ENCODE measurements at regions of chr3 and their contacts with region 1.

Region 1: DNA sequence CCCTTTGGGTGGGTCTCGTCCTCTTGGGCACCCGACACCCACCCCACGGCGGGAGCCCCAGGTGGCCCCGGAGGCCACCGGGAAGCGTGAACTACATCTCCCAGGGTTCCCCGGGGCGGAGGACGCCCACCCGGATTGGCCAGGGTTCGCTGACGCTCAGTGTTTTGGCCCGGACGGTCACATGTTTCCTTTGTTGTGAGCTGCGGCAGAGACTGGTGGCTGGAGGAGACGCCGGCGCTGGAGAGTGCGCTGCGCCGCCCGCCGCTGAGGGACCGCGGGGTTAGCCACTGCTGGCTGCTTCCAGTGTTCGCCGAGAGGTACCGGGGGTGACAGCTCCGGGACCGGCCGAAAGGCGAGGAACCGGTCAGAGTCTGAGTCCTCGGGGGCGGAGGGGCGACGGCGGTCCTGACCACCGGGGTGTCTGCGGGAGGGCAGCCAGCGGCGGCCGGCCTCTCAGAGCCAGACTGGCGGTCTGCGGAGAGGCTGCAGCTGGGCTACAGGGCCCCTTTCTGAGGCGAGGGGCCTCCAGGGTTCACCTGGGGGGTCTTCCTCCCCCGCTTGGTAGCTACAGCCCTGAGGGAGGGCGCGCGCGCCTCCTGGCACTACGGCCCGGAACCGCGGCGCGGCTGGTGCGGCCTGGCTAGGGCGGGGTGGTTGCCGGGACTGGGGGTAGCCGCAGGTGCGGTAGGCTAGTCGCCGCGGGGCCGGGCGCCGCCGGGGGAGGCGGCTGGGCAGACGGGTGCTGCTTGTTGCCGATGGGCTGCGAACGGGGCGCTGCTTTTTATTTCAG is at the start of gene KLHL24:
- DNase-seq: peak; percentile 96 to 97
- ATAC-seq: peak; percentile 97
- H3K4me3 ChIP-seq: peak within 1 kb of the TSS; percentile 68 to 94
- H3K27ac ChIP-seq: peak within 1 kb of the TSS; percentile 66 to 70
- H3K4me1 ChIP-seq: no peaks in the 10 kb centered on the region
- H3K27me3 ChIP-seq: no peaks in the 10 kb centered on the region
- total RNA-seq, gene KLHL24: 33.7 to 62.6 TPM

Region 2: DNA sequence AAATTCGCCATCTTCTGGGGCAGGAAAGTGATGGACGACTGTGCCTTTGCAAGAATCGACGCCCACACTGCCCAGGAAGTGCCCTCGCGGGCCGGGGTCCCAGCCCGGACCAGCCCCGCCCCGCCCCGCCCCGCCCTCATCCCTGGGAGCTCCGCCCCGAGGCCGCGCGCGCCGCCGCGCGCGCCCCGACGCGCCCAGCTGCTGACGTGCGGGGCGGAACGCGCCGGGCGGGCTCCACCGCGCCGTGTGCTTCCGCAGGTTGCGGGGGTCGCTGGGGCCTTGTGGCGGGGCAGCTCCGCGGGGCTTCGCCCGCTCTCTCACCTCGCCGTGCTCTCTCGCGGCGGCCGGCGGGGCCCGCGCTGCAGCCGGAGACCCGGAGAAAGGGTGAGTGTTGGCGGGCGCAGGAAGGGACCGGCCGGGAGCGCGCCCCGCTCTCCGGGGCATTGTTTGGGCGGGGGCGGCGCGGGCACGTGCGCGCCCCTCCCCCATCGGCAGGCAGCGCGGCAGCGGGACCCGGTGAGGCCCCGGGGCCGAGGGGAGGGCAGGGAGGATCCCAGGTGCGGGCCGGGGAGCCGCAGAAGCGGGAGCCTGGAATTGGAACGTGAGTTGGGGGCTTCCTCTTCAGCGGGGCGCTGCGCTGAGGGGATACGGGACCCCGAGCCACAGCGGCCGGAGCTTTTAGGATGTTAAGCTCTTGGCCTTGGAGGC is 62.1 kb after region 1 on chr3 and contains the start of gene YEATS2:
- intact Hi-C with region 1: loop called (anchors 2 to 5 kb)
- DNase-seq: peak; percentile 82 to 88
- ATAC-seq: peak; percentile 89
- H3K4me3 ChIP-seq: peak within 1 kb of the TSS; percentile 68 to 93
- H3K27ac ChIP-seq: peak within 1 kb of the TSS; percentile 10 to 88
- H3K4me1 ChIP-seq: peaks cover 3 to 5% of the 10 kb centered on the region in 2 donors
- H3K27me3 ChIP-seq: no peaks in the 10 kb centered on the region
- total RNA-seq, gene YEATS2: 25.8 to 48.1 TPM

Region 3: DNA sequence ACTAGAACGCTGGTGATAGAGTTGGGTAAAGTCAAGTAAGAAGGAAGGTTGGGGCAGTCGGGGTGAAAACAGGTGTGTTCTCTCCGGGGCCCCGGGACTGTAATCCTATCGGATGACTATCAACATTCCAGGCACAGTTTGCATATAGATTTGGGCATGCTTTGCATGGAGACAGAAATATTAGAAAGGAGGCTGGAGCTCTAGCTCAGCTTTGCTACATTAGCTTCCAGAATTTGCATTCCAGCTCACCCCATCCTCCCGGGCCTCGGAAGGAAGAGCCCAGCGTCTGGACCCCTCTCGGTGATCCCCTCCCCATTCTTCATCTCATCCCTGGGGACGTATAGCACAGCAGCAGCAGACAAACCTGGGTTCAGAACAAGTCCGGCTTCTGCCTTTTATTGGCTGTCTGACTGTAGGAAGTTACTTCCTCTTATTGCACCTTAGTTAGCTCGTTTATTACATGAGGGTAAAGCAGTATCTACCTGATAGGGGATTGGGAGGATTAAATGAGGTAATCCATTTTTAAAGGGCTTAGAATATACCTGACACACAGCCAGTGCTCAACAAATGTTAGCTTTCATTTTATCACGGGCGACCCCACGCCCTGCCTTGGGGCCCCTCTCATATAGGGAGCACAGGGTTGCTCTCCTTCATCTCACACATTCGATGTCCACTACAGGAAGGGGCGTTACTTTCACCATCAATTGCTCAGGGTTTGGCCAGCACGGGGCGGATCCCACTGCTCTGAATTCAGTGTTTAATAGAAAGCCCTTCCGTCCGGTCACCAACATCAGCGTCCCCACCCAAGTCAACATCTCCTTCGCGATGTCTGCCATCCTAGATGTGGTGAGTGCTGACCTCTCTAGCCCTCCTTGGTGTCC is 464.4 kb after region 1 on chr3:
- intact Hi-C with region 1: no loop called
- DNase-seq: no peak
- ATAC-seq: no peak
- H3K4me3 ChIP-seq: no peak overlapping the region
- H3K27ac ChIP-seq: no peak overlapping the region
- H3K4me1 ChIP-seq: no peaks in the 10 kb centered on the region
- H3K27me3 ChIP-seq: no peaks in the 10 kb centered on the region